Right cardiac atrium (tissue), 5 donors: ENCODE measurements at regions of chr2 and their contacts with region 1.

Region 1: GRCh38 chr2:129080715-129081476 is 762.2 kb upstream of the HS6ST1 start:
- DNase-seq: no peak
- ATAC-seq: peak in 1 of 2 donors; percentile 46
- H3K4me3 ChIP-seq: no peak overlapping the region
- H3K27ac ChIP-seq: no peak overlapping the region
- H3K4me1 ChIP-seq: no peaks in the 10 kb centered on the region
- H3K27me3 ChIP-seq: no peaks in the 10 kb centered on the region

Region 2: DNA sequence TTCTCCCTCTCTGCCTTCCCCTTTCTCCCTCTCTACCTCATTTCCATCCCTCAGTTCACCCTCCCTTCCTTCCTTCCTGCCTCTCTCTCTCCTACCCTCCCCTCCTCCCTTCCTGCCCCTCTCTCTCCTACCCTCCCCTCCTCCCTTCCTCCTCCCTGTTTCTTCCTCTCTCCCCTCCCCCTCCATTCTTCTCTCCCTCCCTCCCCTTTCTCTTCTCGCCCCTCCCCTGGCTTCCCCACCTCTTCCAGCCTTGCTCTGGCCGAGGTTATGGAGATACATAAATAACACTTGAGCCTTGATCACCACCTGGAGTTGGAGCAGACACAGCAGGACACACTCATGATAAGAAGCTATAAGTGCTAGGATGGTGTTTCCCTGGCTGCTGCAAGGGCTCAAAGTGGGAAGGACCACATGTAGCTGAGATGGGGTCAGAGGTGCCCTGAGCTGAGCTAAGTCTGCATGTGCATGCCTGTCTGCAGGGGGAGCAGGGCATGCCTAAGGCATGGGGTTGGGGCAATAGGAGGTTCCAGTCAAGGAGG is 436.1 kb before region 1 on chr2:
- intact Hi-C with region 1: loop called in 1 of 4 experiments (anchors 5 kb)
- DNase-seq: no peak
- ATAC-seq: no peak
- H3K4me3 ChIP-seq: no peak overlapping the region
- H3K27ac ChIP-seq: no peak overlapping the region
- H3K4me1 ChIP-seq: no peaks in the 10 kb centered on the region
- H3K27me3 ChIP-seq: no peaks in the 10 kb centered on the region

Region 3: GRCh38 chr2:129277585-129277981 is 196.7 kb after region 1 on chr2:
- intact Hi-C with region 1: no loop called
- DNase-seq: no peak
- ATAC-seq: no peak
- H3K4me3 ChIP-seq: no peak overlapping the region
- H3K27ac ChIP-seq: no peak overlapping the region
- H3K4me1 ChIP-seq: no peaks in the 10 kb centered on the region
- H3K27me3 ChIP-seq: no peaks in the 10 kb centered on the region